HCT116 (cell line): ENCODE measurements at regions of chr4 and their contacts with region 1.

Region 1: DNA sequence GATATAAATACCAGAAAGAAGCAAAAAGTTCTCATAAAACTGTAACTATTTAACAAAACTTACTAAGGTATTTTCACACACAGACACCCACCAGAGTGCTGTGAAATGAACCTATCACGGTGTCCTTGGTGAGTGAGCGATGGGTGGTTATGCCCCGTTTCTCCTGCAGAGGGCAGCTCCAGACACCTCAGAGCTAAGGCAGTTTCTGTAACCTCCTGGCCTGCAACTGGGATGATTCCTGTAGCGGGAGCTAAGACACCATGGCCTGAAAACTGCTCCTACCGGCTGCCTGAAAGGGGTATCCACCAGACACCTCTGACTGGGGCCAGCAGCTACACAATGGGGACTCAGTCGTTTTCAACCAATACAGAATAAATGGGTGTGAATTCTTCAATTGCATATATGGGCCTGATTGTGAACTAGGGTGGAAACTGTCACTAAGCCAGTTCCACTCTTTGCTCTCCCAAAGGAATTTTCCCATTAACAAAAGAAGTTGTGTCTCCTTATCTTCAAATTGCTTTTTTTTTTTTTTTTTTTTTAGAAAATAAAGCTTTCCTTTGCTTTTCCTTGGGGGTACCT is 2375.8 kb upstream of the TENM3 start:
- DNase-seq: peak; percentile 80
- ATAC-seq: peak; percentile 100
- H3K4me3 ChIP-seq: no peak overlapping the region
- H3K27ac ChIP-seq: no peak overlapping the region
- H3K4me1 ChIP-seq: no peaks in the 10 kb centered on the region
- H3K27me3 ChIP-seq: no peaks in the 10 kb centered on the region
- CTCF ChIP-seq: peak; percentile 67 to 93 (median 89)
- POLR2A ChIP-seq: no peak
- RAD21 ChIP-seq: peak; percentile 77

Region 2: DNA sequence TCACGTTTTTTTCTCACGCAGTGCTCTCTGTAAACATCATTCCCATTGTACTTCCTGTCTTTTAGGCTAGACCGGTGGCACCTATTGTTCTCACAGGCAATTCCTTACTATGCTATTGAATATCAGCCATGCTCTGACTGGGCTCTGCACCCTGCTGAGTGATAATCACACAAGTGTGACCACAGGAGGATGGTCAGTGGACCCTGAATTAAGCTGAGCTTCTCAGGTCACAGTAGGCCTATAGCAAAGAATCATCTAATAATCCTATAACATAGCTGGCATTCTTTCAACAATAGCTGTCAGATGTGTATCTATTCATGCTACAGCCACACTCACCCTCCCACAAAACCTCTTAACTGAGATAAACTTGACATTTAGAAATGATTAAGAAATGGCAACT is 24.0 kb before region 1 on chr4:
- CTCF ChIA-PET with region 1: no interaction called
- POLR2A ChIA-PET with region 1: no interaction called
- RAD21 ChIA-PET with region 1: no interaction called
- intact Hi-C with region 1: no loop called
- DNase-seq: no peak
- ATAC-seq: no peak
- H3K4me3 ChIP-seq: no peak overlapping the region
- H3K27ac ChIP-seq: no peak overlapping the region
- H3K4me1 ChIP-seq: no peaks in the 10 kb centered on the region
- H3K27me3 ChIP-seq: no peaks in the 10 kb centered on the region
- CTCF ChIP-seq: no peak
- POLR2A ChIP-seq: no peak
- RAD21 ChIP-seq: no peak

Region 3: GRCh38 chr4:180028682-180029081 is 161.3 kb after region 1 on chr4:
- CTCF ChIA-PET with region 1: interaction called, 8 read pairs
- POLR2A ChIA-PET with region 1: interaction called, 4 read pairs
- RAD21 ChIA-PET with region 1: interaction called in 1 of 2 experiments, 3 read pairs
- intact Hi-C with region 1: loop called (anchors 1 kb)
- DNase-seq: peak; percentile 33
- ATAC-seq: peak; percentile 80
- H3K4me3 ChIP-seq: no peak overlapping the region
- H3K27ac ChIP-seq: no peak overlapping the region
- H3K4me1 ChIP-seq: no peaks in the 10 kb centered on the region
- H3K27me3 ChIP-seq: no peaks in the 10 kb centered on the region
- CTCF ChIP-seq: peak; percentile 13 to 51 (median 37); a peak in 5 of 6 replicates
- POLR2A ChIP-seq: no peak
- RAD21 ChIP-seq: peak; percentile 33

Region 4: GRCh38 chr4:180041576-180041975 is 174.2 kb after region 1 on chr4:
- CTCF ChIA-PET with region 1: no interaction called
- POLR2A ChIA-PET with region 1: no interaction called
- RAD21 ChIA-PET with region 1: no interaction called
- intact Hi-C with region 1: no loop called
- DNase-seq: no peak
- ATAC-seq: no peak
- H3K4me3 ChIP-seq: no peak overlapping the region
- H3K27ac ChIP-seq: no peak overlapping the region
- H3K4me1 ChIP-seq: no peaks in the 10 kb centered on the region
- H3K27me3 ChIP-seq: no peaks in the 10 kb centered on the region
- CTCF ChIP-seq: no peak
- POLR2A ChIP-seq: no peak
- RAD21 ChIP-seq: no peak

Region 5: GRCh38 chr4:180150818-180151217 is 283.4 kb after region 1 on chr4:
- CTCF ChIA-PET with region 1: interaction called, 3 read pairs
- POLR2A ChIA-PET with region 1: no interaction called
- RAD21 ChIA-PET with region 1: no interaction called
- intact Hi-C with region 1: loop called (anchors 1 kb)
- DNase-seq: peak; percentile 8
- ATAC-seq: no peak
- H3K4me3 ChIP-seq: no peak overlapping the region
- H3K27ac ChIP-seq: no peak overlapping the region
- H3K4me1 ChIP-seq: no peaks in the 10 kb centered on the region
- H3K27me3 ChIP-seq: no peaks in the 10 kb centered on the region
- CTCF ChIP-seq: peak; percentile 21 to 64 (median 37); a peak in 5 of 6 replicates
- POLR2A ChIP-seq: no peak
- RAD21 ChIP-seq: peak; percentile 23; the same call in 1 of the 2 replicates